ENCODE measurements at regions of chr16 and their contacts with region 1.

Region 1: DNA sequence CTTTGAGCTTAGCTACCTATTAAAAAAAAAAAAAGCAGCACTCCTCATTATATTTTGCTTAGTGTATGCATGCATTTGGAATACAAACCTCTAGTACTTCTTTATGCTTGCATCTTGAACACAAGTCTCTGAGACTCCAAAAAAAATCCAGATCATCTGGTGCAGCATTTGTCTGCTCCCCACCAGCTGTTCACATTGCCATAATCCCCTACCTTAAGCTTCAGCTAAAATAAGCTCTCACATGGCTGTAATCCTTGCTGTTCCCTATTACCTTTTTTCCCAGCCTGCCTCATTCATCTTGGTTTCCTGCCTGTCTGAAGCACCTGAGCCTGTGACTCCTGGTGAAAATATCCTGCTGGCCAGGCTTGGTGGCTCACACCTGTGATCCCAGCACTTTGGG is 7.5 kb upstream of the NFATC2IP start:
- DNase-seq: no peak
- ATAC-seq: no peak
- H3K4me3 Mint-ChIP-seq: no peak overlapping the region
- H3K27ac Mint-ChIP-seq: no peak overlapping the region
- H3K4me1 Mint-ChIP-seq: peaks cover 22% of the 10 kb centered on the region
- H3K27me3 Mint-ChIP-seq: peaks cover 7% of the 10 kb centered on the region

Region 2: DNA sequence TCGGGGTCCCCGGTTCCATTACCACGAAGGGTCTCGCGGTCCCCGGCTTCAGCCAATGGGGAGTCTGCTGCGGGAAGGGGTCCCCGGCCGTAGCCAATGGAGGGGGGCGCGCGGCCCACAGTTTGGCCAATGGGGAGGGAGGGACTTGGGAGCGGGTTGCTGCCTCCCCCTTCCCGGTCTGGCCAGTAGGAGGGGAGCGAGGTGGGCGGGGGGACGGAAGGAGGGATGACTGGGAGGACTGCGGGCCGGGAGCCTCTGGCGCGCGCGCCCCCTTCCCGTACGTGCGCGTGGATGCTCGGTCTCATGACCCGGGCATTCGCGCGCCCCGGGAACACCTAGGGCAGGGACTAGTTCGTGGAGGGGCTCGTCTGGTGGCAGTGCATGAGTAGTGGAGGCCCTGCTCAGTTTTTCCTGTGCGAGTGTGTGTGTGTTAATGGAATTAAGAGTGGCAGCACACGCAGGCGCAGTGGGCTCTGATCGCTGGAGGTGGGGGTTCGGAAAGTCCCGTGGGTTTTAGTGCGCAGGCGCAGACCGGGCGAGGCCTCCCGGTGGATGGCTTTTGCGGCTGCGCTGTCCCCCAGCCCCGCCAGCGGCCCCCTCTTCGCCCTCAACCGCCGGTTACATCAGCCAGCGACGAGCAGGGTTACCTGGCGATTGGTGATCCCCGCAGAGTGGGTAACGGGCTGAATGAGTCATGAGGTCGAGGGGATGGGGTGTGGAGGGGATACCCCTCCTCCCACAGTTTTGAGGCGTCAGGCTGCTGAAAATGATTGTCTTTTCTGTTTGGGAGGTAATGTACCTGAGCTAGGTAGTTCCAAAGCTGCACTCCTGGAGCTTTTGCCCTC is 119.2 kb before region 1 on chr16:
- CTCF ChIA-PET with region 1: interaction called, 27 read pairs
- POLR2A ChIA-PET with region 1: interaction called, 14 read pairs
- DNase-seq: peak; percentile 98
- ATAC-seq: peak; percentile 76
- H3K4me3 Mint-ChIP-seq: peak overlapping the region; percentile 93
- H3K27ac Mint-ChIP-seq: peak overlapping the region; percentile 96
- H3K4me1 Mint-ChIP-seq: peaks cover 45% of the 10 kb centered on the region
- H3K27me3 Mint-ChIP-seq: no peaks in the 10 kb centered on the region

Region 3: GRCh38 chr16:28846080-28846932 is 97.0 kb before region 1 on chr16 and contains the start of gene TUFM:
- CTCF ChIA-PET with region 1: interaction called, 51 read pairs
- POLR2A ChIA-PET with region 1: interaction called, 3 read pairs
- DNase-seq: peak; percentile 99
- ATAC-seq: peak; percentile 92
- H3K4me3 Mint-ChIP-seq: peak within 1 kb of the TSS; percentile 92
- H3K27ac Mint-ChIP-seq: peak within 1 kb of the TSS; percentile 94
- H3K4me1 Mint-ChIP-seq: peaks cover 27% of the 10 kb centered on the region
- H3K27me3 Mint-ChIP-seq: no peaks in the 10 kb centered on the region
- total RNA-seq, gene TUFM: 150 to 153 TPM

Region 4: GRCh38 chr16:28873536-28874201 is 69.6 kb before region 1 on chr16:
- CTCF ChIA-PET with region 1: interaction called, 45 read pairs
- POLR2A ChIA-PET with region 1: interaction called, 3 read pairs
- DNase-seq: peak; percentile 71
- ATAC-seq: peak; percentile 80
- H3K4me3 Mint-ChIP-seq: no peak overlapping the region
- H3K27ac Mint-ChIP-seq: no peak overlapping the region
- H3K4me1 Mint-ChIP-seq: peaks cover 17% of the 10 kb centered on the region
- H3K27me3 Mint-ChIP-seq: no peaks in the 10 kb centered on the region

Region 5: DNA sequence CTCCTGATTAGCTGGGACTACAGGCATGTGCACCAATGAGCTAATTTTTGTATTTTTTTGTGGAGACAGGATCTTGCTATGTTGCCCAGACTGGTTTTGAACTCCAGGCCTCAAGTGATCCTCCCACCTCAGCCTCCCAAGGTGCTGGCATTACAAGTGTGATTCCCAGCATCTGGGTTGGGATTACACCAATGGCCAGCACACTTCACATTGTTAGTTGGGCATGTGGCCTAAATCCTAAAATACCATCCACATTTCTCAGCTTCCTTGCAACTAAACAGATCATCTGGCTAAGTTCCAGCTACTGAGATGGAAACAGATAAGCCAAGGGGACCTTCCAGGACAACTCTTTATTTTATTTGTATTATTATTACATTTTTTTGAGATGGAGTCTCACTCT is 28.1 kb before region 1 on chr16:
- CTCF ChIA-PET with region 1: interaction called, 13 read pairs
- POLR2A ChIA-PET with region 1: interaction called, 3 read pairs
- DNase-seq: no peak
- ATAC-seq: no peak
- H3K4me3 Mint-ChIP-seq: no peak overlapping the region
- H3K27ac Mint-ChIP-seq: no peak overlapping the region
- H3K4me1 Mint-ChIP-seq: no peaks in the 10 kb centered on the region
- H3K27me3 Mint-ChIP-seq: no peaks in the 10 kb centered on the region

Measured in activated CD8-positive, alpha-beta T cell treated with anti-CD3 and anti-CD28 coated beads, Interleukin-2, amount 10 ng/mL, durations not matched to agents 7 days and 5 days (primary cell).